ENCODE measurements at regions of chr12 and their contacts with region 1.

Region 1: GRCh38 chr12:92784795-92785562 is 82.2 kb downstream of the PLEKHG7 start:
- DNase-seq: no peak
- ATAC-seq: peak; percentile 93 to 97 (median 97)
- H3K4me3 ChIP-seq: no peak overlapping the region
- H3K27ac ChIP-seq: peak overlapping the region; percentile 48
- H3K4me1 ChIP-seq: peaks cover 26% of the 10 kb centered on the region
- H3K27me3 ChIP-seq: no peaks in the 10 kb centered on the region
- CTCF ChIP-seq: peak; percentile 66

Region 2: DNA sequence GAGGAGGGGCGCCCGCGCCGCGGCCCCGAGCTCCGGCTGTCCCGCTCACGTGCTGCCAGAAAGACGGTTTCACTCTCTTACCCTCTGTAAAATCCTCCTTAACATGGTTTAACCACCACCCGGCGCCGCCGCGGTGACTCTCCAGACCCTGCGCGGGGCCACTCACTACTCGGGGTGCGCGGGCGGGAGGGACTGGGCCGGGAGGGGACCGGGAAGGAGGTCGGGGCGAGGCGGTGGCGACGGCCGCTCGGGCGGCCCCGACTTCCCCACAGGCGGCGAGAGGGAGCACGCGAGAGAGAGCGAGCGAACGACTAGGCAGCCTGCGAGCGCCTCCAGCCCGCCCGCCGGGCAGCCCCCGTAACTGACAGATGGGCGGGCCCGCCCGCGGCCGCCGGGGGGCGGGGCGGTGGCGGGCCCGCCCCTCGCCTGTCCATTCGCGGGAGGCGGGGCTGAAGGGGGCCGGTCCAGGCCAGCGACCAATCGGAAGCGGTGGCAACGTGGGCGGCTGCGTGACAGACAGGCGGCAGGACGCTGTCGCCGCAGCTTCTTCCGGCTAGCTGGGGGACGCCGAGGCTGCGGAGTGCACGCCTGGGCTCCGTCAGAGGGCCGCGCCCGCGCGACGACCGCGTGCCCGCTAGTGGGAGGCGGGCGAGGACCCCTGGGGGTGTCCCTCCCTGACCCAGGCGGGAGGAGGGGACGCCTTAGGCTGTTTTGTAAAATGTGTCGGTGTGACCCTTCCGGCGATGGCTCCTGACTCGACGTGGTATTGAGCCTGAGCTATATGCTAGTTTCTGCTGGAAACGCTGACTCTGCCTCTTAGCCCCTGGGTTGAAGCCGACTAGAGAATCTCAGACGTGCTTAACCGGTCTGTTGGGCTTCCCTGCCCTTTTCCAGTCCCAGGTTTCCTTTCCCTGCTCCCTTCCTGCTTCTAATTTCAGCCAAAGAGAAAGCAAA is 144.3 kb after region 1 on chr12 and contains the start of gene EEA1:
- intact Hi-C with region 1: loop called (anchors 5 kb)
- DNase-seq: peak; percentile 98 to 99
- ATAC-seq: peak; percentile 91 to 95 (median 94)
- H3K4me3 ChIP-seq: peak within 1 kb of the TSS; percentile 94
- H3K27ac ChIP-seq: peak within 1 kb of the TSS; percentile 94
- H3K4me1 ChIP-seq: peaks cover 39% of the 10 kb centered on the region
- H3K27me3 ChIP-seq: no peaks in the 10 kb centered on the region
- CTCF ChIP-seq: peak; percentile 15
- total RNA-seq, gene EEA1: 27.7 to 51.8 (median 37.1) TPM

Region 3: DNA sequence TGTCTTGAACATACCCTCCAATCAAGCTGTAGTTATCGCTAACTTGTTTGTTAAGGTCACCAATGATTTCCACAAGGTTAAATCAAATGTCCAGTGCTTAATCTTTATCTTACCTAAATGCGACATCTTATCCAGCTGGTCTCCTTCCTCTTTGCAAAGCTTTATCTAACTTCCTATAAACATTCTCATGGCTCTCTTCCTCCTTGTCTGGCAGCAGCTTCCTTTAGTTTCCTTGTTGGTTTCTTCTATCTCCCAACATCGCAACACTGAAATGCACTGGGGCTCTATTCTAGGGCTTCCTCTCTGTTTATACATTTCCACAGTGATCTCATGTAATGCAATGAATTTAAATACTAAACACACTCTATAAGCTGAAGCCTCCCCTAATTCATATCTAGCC is 628.1 kb after region 1 on chr12:
- intact Hi-C with region 1: loop called in 1 of 2 experiments (anchors 5 kb)
- DNase-seq: no peak
- ATAC-seq: no peak
- H3K4me3 ChIP-seq: no peak overlapping the region
- H3K27ac ChIP-seq: no peak overlapping the region
- H3K4me1 ChIP-seq: peaks cover 50% of the 10 kb centered on the region
- H3K27me3 ChIP-seq: no peaks in the 10 kb centered on the region
- CTCF ChIP-seq: no peak

Region 4: DNA sequence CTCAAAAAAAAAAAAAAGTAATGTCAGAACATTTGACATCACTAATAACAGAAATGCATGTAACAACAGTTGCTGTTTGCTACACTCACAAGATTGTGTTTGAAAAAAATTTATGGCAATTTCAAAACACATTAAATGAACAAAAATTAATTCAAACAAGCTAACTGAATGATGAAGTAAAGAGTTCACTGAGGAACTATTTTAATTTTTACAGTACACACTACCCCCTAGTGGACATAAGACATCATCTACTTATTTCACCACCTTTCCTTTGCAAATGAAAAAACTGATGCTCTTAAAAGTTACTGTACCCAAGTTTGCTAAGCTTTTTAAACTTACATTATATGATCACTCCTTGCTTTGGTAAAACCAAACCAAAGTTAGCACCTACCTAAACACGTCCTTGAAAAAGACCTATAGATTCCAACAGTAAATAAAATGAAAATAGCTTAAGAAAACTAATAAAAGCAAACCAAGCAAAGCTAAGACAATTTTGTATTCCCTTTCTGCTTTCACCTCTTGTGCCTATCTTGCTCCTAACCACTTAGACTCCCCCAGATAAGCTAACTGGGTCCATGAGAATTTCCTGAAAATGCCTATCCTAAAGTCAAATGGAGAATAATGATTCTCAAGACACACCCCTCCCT is 634.5 kb after region 1 on chr12:
- intact Hi-C with region 1: loop called (anchors 5 to 10 kb)
- DNase-seq: no peak
- ATAC-seq: peak; percentile 61 to 79 (median 72)
- H3K4me3 ChIP-seq: peak overlapping the region; percentile 13
- H3K27ac ChIP-seq: peak overlapping the region; percentile 76
- H3K4me1 ChIP-seq: peaks cover 81% of the 10 kb centered on the region
- H3K27me3 ChIP-seq: no peaks in the 10 kb centered on the region
- CTCF ChIP-seq: peak; percentile 75

Measured in psoas muscle (tissue), 8 donors.